ENCODE measurements at regions of chr5 and their contacts with region 1.

Region 1: DNA sequence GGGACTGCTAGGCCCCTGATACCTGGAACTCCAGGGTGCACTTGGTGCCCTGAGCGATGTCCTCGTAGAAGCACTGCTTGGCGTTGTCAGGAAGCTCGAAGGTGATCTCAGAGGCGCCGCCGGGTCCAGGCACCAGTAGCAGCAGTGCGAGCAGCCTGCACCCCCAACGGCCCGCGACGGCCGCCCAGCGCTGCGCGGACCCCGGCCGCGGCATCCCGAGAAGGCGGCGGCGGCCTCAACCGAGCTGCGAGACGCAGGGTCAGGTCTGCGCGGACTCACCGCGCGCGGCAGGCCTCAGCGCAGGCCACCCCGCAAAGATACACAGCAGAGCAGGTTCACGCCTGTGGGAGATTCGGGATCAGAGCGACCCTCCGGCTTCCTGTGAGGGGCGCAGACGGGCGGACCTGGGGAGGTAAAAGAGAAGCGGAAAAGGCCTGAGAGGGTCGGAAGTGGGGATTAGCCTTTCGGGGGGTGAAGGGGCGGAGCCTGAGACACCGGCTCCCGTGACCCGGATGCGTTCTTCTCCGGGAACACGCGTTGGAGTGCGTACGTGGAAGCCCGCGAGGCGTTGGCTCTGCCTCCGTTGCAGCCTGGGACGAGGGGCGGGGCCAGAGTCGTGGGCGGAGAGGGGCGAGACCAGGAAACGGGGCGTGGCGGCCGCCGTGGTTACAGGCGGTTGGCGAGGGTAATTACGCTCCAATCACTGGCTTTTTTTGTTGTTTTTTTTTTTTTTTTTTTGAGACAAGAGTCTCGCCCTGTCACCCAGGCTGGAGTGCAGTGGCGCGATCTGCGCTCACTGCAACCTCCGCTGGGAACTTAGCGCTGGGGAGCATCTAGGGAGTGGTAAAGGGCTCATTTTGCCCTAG is at the start of gene TMED7:
- DNase-seq: peak; percentile 98
- H3K4me3 ChIP-seq: peak within 1 kb of the TSS; percentile 73 to 90
- H3K27ac ChIP-seq: peak within 1 kb of the TSS; percentile 94
- H3K4me1 ChIP-seq: peaks cover 39% of the 10 kb centered on the region
- H3K27me3 ChIP-seq: no peaks in the 10 kb centered on the region
- CTCF ChIP-seq: peak in 1 of 3 experiments; percentile 24
- POLR2A ChIP-seq: peak in 1 of 2 donors; percentile 83
- total RNA-seq, gene TMED7: 48.4 TPM

Region 2: DNA sequence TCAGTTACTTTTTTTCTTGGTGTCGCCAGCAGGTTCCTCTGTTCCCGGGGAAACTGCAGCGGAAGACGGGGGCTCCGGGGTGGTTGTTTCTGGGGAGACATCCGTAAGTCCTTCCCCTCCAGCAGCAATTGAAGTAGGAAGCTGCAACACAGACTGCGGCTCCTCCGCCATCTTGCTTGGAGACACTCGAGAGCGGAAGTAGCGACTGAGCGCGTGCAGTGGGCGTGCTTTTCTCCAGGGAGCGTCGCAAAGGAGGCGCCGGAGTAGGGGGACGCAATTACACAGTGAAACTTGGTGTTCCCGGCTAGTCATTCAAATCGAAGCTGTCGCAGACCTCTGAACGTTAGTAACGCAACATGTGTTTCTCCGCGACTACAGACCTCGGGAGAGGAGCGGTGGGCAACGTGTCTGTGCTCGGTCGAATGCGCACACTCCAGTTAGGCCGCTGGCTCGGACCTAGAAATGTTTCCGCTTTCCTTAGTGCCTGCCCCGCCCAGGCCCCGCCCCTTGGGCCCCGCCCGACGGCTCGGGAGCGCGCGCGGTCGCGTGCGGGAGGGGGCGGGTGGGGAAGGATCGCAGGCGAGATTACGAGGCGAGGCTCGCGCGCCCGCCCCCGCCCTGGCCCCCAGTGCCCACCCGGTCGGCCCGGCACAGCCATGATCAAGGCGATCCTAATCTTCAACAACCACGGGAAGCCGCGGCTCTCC is 215.7 kb after region 1 on chr5 and contains the starts of genes AP3S1 and ATG12:
- intact Hi-C with region 1: loop called (anchors 5 kb)
- DNase-seq: peak in 1 of 2 donors; percentile 94
- H3K4me3 ChIP-seq: peak within 1 kb of the TSS; percentile 86 to 99
- H3K27ac ChIP-seq: peak within 1 kb of the TSS; percentile 94
- H3K4me1 ChIP-seq: peaks cover 66% of the 10 kb centered on the region
- H3K27me3 ChIP-seq: no peaks in the 10 kb centered on the region
- CTCF ChIP-seq: no peak
- POLR2A ChIP-seq: peak in 1 of 2 donors; percentile 76
- total RNA-seq, gene AP3S1: 36.8 TPM
- total RNA-seq, gene ATG12: 50.6 TPM

Measured in vagina (tissue), 2 donors.